Sigmoid colon (tissue), 7 donors: ENCODE measurements at regions of chr2 and their contacts with region 1.

Region 1: DNA sequence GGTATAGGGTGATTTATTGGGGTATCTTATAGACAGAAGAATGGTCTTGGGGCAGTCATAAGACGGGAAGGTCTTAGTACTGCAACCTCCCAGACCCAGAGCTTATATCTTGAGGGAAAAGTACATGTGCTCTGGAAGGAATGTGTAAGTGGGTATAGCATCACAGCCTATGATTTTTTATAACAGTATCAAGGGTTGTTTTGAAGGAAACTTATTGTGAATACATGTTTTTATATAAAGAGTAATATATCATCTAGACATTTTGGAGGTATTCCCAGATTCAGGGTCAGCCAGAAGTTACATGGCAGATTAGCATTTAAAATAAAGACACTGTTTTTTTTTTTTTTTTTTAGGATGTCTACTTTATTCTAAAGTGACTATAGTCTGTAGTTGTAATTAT is 47.6 kb upstream of the STON1 start:
- DNase-seq: no peak
- H3K4me3 ChIP-seq: no peak overlapping the region
- H3K27ac ChIP-seq: peak overlapping the region; percentile 78 to 91 (median 88)
- H3K4me1 ChIP-seq: peaks cover 0 to 66% (median 53%) of the 10 kb centered on the region in 4 donors
- H3K27me3 ChIP-seq: no peaks in the 10 kb centered on the region
- CTCF ChIP-seq: no peak
- EP300 ChIP-seq: peak in 3 of 4 donors; percentile 60 to 85 (median 81)
- POLR2A ChIP-seq: no peak

Region 2: DNA sequence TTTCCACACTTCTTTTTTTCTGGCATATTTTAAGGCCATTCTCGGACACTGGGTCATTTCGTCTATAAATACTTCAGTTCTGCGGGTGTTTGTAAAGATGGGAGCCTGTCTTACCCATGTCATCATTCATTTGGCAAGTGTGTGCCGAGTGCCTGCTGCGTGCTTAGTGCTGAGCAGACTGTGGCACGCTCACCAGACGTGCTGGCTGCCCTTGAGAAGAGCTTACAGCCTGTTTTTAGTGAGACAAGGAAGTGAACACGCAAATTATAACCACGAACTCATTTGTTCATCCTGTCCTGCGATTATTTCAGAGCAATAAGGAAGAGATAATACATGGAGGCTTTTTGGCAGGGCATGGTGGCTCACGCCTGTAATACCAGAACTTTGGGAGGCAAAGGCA is 37.3 kb after region 1 on chr2:
- intact Hi-C with region 1: loop called (anchors 2 kb)
- DNase-seq: peak; percentile 86
- H3K4me3 ChIP-seq: no peak overlapping the region
- H3K27ac ChIP-seq: peak overlapping the region in 3 of 4 donors; percentile 93 to 98 (median 95)
- H3K4me1 ChIP-seq: peaks cover 0 to 49% (median 33%) of the 10 kb centered on the region in 4 donors
- H3K27me3 ChIP-seq: no peaks in the 10 kb centered on the region
- CTCF ChIP-seq: no peak
- EP300 ChIP-seq: no peak
- POLR2A ChIP-seq: no peak